ENCODE measurements at regions of chr2 and their contacts with region 1.

Region 1: DNA sequence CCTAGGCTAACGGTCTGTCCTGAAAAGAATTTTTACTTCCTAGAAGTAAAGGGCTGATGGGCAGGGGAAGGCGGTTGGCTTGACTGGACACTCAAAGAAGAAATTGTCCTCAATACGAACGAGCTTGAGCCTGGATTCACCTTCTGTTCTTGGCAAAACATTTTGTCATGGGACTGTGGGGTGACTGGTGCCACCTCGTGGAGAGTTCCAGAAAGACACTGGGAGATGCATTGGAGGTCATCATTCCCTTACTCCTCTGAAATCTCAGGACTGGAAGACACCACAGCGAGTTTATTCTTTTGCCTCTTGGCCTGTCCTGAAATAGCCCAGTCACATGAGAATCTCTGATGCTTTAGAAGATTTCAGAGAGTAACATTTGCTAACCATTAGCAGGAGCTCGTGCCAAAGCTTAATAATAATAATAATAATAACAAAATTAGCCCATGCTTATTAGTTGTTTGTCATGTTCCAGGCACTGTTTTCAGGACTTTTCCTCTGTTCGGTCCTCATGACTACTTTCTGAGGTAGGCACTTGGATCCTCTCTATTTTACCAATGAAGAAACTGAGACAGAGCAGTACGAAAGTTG is 44.5 kb downstream of the TMEM182 start:
- DNase-seq: peak in 1 of 2 experiments; percentile 67
- H3K4me3 ChIP-seq: no peak overlapping the region
- H3K27ac ChIP-seq: no peak overlapping the region
- H3K4me1 ChIP-seq: no peaks in the 10 kb centered on the region
- H3K27me3 ChIP-seq: no peaks in the 10 kb centered on the region
- CTCF ChIP-seq: peak; percentile 77

Region 2: GRCh38 chr2:102449370-102449974 is 356.9 kb before region 1 on chr2:
- CTCF ChIA-PET with region 1: interaction called, 3 read pairs
- POLR2A ChIA-PET with region 1: no interaction called
- intact Hi-C with region 1: loop called (anchors 2 kb)
- DNase-seq: peak in 1 of 2 experiments; percentile 41
- H3K4me3 ChIP-seq: no peak overlapping the region
- H3K27ac ChIP-seq: no peak overlapping the region
- H3K4me1 ChIP-seq: no peaks in the 10 kb centered on the region
- H3K27me3 ChIP-seq: no peaks in the 10 kb centered on the region
- CTCF ChIP-seq: peak; percentile 83

Region 3: GRCh38 chr2:102558463-102558862 is 247.9 kb before region 1 on chr2:
- CTCF ChIA-PET with region 1: no interaction called
- POLR2A ChIA-PET with region 1: no interaction called
- intact Hi-C with region 1: no loop called
- DNase-seq: no peak
- H3K4me3 ChIP-seq: no peak overlapping the region
- H3K27ac ChIP-seq: no peak overlapping the region
- H3K4me1 ChIP-seq: no peaks in the 10 kb centered on the region
- H3K27me3 ChIP-seq: no peaks in the 10 kb centered on the region
- CTCF ChIP-seq: no peak

Region 4: GRCh38 chr2:102753563-102754159 is 52.7 kb before region 1 on chr2:
- CTCF ChIA-PET with region 1: interaction called, 4 read pairs
- POLR2A ChIA-PET with region 1: no interaction called
- intact Hi-C with region 1: loop called (anchors 2 kb)
- DNase-seq: peak; percentile 2 to 45
- H3K4me3 ChIP-seq: no peak overlapping the region
- H3K27ac ChIP-seq: no peak overlapping the region
- H3K4me1 ChIP-seq: no peaks in the 10 kb centered on the region
- H3K27me3 ChIP-seq: no peaks in the 10 kb centered on the region
- CTCF ChIP-seq: peak; percentile 88

Measured in PC-9 (cell line).